ENCODE measurements at regions of chr14 and their contacts with region 1.

Region 1: DNA sequence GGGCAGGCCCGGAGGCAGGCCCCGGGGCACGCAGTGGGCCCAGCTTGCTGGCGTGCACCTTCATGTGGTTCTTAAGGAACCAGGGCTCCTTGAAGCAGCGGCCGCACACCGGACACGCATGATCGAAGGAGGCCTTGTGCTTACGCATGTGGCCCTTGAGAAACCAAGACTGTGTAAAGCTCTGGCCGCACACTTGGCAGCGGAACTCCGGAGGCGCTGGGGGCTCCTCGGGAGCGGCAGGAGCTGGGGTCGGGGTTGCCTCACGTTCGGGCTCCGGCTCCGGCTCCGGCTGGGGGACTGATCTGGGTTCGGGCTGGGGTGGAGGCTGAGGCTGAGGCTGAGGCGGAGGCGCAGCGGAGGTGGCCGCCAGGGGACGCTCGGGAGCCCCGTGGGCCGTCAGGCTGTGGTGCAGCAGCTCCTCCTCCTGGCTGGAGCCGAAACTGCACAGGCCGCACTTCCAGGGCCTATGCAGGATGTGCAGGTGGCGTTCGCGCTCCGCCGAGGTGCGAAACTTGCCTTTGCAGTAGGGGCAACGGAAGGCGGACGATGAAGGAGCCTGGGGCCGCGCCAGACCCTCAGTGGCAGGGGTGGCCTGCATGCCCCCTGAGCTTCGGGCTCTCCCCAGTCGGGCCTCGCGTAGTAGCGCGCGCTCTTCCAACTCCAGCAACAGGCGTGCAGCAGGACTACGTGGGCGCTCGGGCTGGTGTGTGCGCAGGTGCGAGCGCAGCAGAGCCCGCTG is 6.0 kb downstream of the ZNF219 start:
- DNase-seq: peak; percentile 74 to 83
- ATAC-seq: peak; percentile 52 to 87
- H3K4me3 ChIP-seq: no peak overlapping the region
- H3K27ac ChIP-seq: peak overlapping the region in 1 of 2 experiments; percentile 49; a peak in 3 of 6 replicates
- H3K4me1 ChIP-seq: peaks cover 41% of the 10 kb centered on the region
- CTCF ChIP-seq: peak; percentile 99
- EP300 ChIP-seq: no peak
- POLR2A ChIP-seq: no peak
- RAD21 ChIP-seq: peak; percentile 92 to 95

Region 2: GRCh38 chr14:21003788-21004346 is 88.6 kb before region 1 on chr14:
- CTCF ChIA-PET with region 1: interaction called, 212 read pairs
- POLR2A ChIA-PET with region 1: no interaction called
- DNase-seq: no peak
- ATAC-seq: no peak
- H3K4me3 ChIP-seq: no peak overlapping the region
- H3K27ac ChIP-seq: no peak overlapping the region
- H3K4me1 ChIP-seq: no peaks in the 10 kb centered on the region
- CTCF ChIP-seq: no peak
- EP300 ChIP-seq: no peak
- POLR2A ChIP-seq: no peak
- RAD21 ChIP-seq: no peak

Region 3: GRCh38 chr14:21032326-21033132 is 59.9 kb before region 1 on chr14:
- CTCF ChIA-PET with region 1: interaction called, 17 read pairs
- POLR2A ChIA-PET with region 1: no interaction called
- DNase-seq: no peak
- ATAC-seq: no peak
- H3K4me3 ChIP-seq: no peak overlapping the region
- H3K27ac ChIP-seq: no peak overlapping the region
- H3K4me1 ChIP-seq: no peaks in the 10 kb centered on the region
- CTCF ChIP-seq: no peak
- EP300 ChIP-seq: no peak
- POLR2A ChIP-seq: no peak
- RAD21 ChIP-seq: no peak

Region 4: DNA sequence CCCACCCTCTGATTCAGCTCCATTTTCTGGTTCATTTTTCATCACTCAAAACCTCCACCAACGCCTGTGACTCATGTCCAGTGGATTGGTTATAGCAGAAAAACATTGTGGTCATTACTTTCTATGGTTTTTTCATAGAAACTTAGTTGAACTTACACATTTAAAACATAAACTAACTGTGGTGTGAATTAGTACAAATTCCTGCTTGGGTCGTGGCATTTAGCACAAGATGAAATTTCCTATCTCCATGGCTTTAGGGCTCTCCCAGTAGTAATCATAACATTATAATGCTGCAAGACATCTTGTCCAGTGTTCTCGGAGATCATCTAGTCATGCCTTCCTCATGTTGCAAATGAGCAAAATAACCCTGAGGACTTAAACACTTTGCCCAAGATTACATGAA is 43.2 kb before region 1 on chr14:
- CTCF ChIA-PET with region 1: interaction called, 57 read pairs
- POLR2A ChIA-PET with region 1: no interaction called
- DNase-seq: no peak
- ATAC-seq: no peak
- H3K4me3 ChIP-seq: no peak overlapping the region
- H3K27ac ChIP-seq: no peak overlapping the region
- H3K4me1 ChIP-seq: peaks cover 2% of the 10 kb centered on the region; the same call in 1 of the 3 replicates
- CTCF ChIP-seq: no peak
- EP300 ChIP-seq: no peak
- POLR2A ChIP-seq: no peak
- RAD21 ChIP-seq: no peak

Region 5: DNA sequence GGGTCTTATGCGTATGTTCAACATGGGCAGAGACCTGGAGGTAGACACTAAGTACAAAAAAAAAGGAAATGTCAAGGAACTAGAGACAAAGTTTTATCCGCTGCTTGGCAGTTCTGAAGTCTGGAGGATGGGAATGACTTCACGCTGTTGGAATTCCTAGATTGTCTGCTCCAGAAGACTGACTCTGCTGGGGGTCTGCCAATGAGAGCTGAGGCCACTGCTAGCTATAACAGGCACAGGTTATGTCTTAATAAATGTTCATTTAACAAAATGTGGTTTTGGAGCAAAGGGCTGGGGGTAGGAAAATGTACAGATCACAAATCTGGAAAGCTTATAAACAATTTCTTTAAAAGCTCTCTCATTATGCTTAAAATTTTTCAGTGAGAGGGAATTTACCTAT is 29.0 kb before region 1 on chr14:
- CTCF ChIA-PET with region 1: interaction called, 194 read pairs
- POLR2A ChIA-PET with region 1: interaction called, 11 read pairs
- DNase-seq: no peak
- ATAC-seq: peak; percentile 37 to 62; a peak in 3 of 6 replicates
- H3K4me3 ChIP-seq: no peak overlapping the region
- H3K27ac ChIP-seq: peak overlapping the region; percentile 22 to 52; a peak in 3 of 6 replicates
- H3K4me1 ChIP-seq: peaks cover 23% of the 10 kb centered on the region
- CTCF ChIP-seq: no peak
- EP300 ChIP-seq: no peak
- POLR2A ChIP-seq: no peak
- RAD21 ChIP-seq: no peak

Region 6: GRCh38 chr14:21103710-21104447 is 11.4 kb after region 1 on chr14:
- CTCF ChIA-PET with region 1: interaction called, 292 read pairs
- POLR2A ChIA-PET with region 1: interaction called, 19 read pairs
- DNase-seq: peak; percentile 93 to 98
- ATAC-seq: peak; percentile 82 to 91
- H3K4me3 ChIP-seq: peak overlapping the region; percentile 57
- H3K27ac ChIP-seq: peak overlapping the region; percentile 96 to 97
- H3K4me1 ChIP-seq: peaks cover 81% of the 10 kb centered on the region
- CTCF ChIP-seq: peak; percentile 56
- EP300 ChIP-seq: 0 out of 5 replicates have a peak, but pooled peaks of 1 of the 2 experiments have one; percentile 15
- POLR2A ChIP-seq: peak; percentile 86
- RAD21 ChIP-seq: peak; percentile 10 to 20; a peak in 1 of 5 replicates

Measured in A549 (cell line).